Activated CD4-positive, alpha-beta memory T cell treated with anti-CD3 and anti-CD28 coated beads for 36 hours (primary cell): ENCODE measurements at regions of chr17 and their contacts with region 1.

Region 1: GRCh38 chr17:82863941-82864774 is 24.3 kb upstream of the ZNF750 start:
- DNase-seq: peak; percentile 95
- H3K4me3 Mint-ChIP-seq: peak overlapping the region; percentile 69
- H3K27ac Mint-ChIP-seq: peak overlapping the region; percentile 85
- H3K4me1 Mint-ChIP-seq: peaks cover 83% of the 10 kb centered on the region
- H3K27me3 Mint-ChIP-seq: no peaks in the 10 kb centered on the region

Region 2: GRCh38 chr17:82698065-82698973 is 165.8 kb before region 1 on chr17 and contains the start of gene RAB40B:
- CTCF ChIA-PET with region 1: no interaction called
- POLR2A ChIA-PET with region 1: no interaction called
- intact Hi-C with region 1: no loop called
- DNase-seq: peak; percentile 99
- H3K4me3 Mint-ChIP-seq: peak within 1 kb of the TSS; percentile 71
- H3K27ac Mint-ChIP-seq: no peak within 1 kb of the TSS
- H3K4me1 Mint-ChIP-seq: peaks cover 8% of the 10 kb centered on the region
- H3K27me3 Mint-ChIP-seq: no peaks in the 10 kb centered on the region
- total RNA-seq, gene RAB40B: 1.4 to 1.9 TPM

Region 3: DNA sequence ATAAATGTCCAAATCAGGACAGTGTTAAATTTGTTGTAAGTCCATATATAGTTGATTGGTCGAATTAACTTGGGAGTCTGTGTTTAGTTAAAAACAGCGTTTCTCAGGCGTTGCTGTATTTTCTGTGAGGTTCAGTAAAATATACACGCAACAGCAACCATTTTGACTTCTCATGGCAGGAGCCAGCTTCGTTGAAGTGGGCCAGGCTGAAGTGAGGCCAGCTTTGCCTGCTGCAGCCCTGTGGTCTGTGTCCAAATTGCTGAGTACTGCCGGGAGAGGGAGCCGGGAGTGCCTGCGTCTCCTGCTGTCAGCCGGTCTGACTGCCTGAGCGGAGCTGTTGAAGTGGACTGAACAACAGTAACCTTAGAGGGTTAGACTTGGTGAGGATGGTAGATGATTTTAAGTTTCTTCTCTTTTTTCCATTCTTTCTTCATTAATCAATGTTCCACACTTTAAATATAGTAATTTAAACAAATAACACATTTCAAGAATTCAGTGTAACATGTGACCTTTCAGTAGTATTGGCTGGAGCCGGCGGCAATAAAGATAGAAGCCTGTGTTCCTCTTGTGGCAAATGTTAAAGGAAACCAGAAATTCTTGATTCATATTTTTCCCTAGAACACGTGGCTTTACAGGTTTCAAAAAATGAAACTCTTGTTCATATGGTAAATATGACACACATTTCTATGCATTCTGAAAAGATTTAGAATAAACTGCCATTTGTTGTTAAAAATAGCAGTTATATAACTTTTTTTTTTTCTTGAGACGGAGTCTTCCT is 12.6 kb after region 1 on chr17:
- CTCF ChIA-PET with region 1: interaction called, 3 read pairs
- POLR2A ChIA-PET with region 1: interaction called, 7 read pairs
- intact Hi-C with region 1: loop called (anchors 1 kb)
- DNase-seq: peak; percentile 31
- H3K4me3 Mint-ChIP-seq: no peak overlapping the region
- H3K27ac Mint-ChIP-seq: peak overlapping the region; percentile 23
- H3K4me1 Mint-ChIP-seq: peaks cover 47% of the 10 kb centered on the region
- H3K27me3 Mint-ChIP-seq: no peaks in the 10 kb centered on the region

Region 4: DNA sequence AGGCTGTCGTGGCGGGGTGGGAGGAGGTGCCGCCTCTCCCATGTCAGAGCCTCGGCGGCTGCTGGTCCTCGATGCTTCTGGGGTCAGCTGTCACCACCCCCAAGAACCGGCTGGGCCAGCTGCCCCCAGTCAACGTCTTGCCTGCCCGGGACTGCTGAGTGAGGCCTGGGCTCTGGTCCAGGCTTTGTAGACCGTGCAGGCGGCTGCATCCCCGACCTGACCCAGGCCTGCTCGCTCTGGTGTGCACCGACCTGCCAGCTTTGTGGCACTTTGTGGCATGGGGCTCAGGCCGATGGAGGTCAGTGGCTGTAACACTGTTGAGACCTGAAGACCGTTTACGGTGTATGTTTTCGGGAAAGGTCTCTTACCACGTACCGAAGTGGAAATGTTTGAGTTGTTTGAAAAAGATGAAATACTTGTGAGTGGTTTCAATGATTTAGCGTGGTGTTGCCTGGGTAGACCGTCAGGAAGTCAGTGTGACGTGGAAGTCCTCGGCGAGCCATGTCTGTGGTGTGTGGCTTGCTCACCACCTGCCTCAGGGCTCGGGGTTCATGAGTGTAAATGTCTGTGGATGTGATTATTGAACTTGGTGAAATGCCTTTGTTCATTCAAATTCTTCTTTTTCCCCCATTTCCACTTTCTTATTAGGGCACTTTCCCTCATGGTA is 28.9 kb after region 1 on chr17:
- CTCF ChIA-PET with region 1: interaction called, 3 read pairs
- POLR2A ChIA-PET with region 1: interaction called, 4 read pairs
- intact Hi-C with region 1: loop called (anchors 1 kb)
- DNase-seq: peak; percentile 82
- H3K4me3 Mint-ChIP-seq: peak overlapping the region; percentile 55
- H3K27ac Mint-ChIP-seq: peak overlapping the region; percentile 87
- H3K4me1 Mint-ChIP-seq: peaks cover 36% of the 10 kb centered on the region
- H3K27me3 Mint-ChIP-seq: no peaks in the 10 kb centered on the region